ENCODE measurements at regions of chr6 and their contacts with region 1.

Region 1: DNA sequence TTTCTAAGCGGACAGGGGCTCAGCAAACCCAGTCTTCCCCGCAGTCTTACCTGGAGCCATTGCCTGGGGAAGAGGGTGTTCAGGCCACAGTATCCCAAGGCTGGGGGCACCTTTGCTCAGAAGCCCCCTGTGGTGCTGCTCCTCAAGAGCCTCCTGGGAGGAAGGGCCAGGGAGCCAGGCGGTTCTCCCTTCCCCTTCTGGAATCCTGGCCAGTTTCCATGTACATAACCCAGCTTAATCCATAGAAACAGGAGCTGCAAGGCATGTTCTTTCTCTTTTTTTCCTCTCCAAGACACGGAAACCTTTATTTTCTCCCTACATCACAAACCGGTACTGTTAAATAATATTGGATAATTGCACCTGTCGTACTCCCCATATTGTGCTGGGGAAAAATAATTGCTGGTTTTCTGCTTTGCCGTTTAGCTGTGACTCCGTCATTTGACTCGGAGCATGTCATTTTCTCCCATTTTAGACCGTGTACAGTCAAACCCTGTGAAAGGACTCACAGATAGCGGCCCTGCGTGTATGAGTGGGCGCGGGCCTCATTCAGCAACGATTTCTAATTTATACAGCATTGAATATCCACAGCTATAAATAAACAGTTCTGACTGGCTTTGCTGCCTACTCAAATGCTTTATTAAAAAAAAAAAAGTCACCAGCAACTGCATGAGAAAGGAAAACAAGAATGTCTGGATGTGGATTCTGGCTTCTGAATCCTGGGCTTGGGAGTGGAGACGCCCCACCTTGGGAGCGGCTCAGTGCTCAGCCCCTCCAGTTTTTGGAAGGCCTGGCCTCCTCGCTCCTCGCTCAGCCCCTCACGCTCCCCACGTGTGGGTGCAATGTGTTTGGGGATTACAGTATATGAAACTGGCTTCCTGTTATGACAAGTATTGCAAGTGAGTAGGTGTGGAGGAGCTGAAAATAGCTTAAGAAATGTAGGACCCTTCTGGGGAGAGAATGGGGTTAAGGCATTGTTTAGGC is 67.3 kb downstream of the ADTRP start:
- DNase-seq: peak; percentile 80
- H3K4me3 Mint-ChIP-seq: peak overlapping the region; percentile 83
- H3K27ac Mint-ChIP-seq: peak overlapping the region; percentile 99
- H3K4me1 Mint-ChIP-seq: peaks cover 71% of the 10 kb centered on the region
- H3K27me3 Mint-ChIP-seq: no peaks in the 10 kb centered on the region

Region 2: DNA sequence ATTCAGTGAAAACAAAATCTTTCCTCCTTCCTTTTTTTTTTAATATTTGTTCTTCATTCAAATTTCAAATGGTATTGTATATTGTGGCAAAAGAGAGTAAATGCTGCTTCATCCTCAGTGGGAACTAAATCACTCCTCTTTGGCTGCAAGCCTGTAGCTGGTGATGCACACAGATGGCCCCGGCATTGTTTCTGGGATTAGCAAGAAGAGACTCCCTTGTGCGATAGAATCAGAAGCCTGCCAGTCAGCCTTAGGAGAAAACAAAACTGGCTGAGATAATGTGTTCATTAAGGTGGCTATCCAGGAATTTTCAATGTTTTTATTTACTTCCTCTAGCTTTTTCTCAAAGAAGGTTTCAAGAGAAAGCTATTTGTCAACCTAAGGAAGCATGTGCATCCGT is 646.5 kb before region 1 on chr6:
- intact Hi-C with region 1: no loop called
- DNase-seq: no peak
- H3K4me3 Mint-ChIP-seq: no peak overlapping the region
- H3K27ac Mint-ChIP-seq: no peak overlapping the region
- H3K4me1 Mint-ChIP-seq: no peaks in the 10 kb centered on the region
- H3K27me3 Mint-ChIP-seq: peaks cover 10% of the 10 kb centered on the region

Region 3: GRCh38 chr6:11722805-11723631 is 11.7 kb after region 1 on chr6:
- intact Hi-C with region 1: loop called (anchors 1 kb)
- DNase-seq: no peak
- H3K4me3 Mint-ChIP-seq: peak overlapping the region; percentile 68
- H3K27ac Mint-ChIP-seq: peak overlapping the region; percentile 79
- H3K4me1 Mint-ChIP-seq: peaks cover 50% of the 10 kb centered on the region
- H3K27me3 Mint-ChIP-seq: no peaks in the 10 kb centered on the region

Region 4: GRCh38 chr6:11785774-11786579 is 74.7 kb after region 1 on chr6:
- intact Hi-C with region 1: loop called (anchors 1 kb)
- DNase-seq: peak; percentile 82
- H3K4me3 Mint-ChIP-seq: peak overlapping the region; percentile 46
- H3K27ac Mint-ChIP-seq: peak overlapping the region; percentile 72
- H3K4me1 Mint-ChIP-seq: peaks cover 7% of the 10 kb centered on the region
- H3K27me3 Mint-ChIP-seq: no peaks in the 10 kb centered on the region

Region 5: GRCh38 chr6:11912426-11912825 is 201.1 kb after region 1 on chr6:
- intact Hi-C with region 1: loop called (anchors 5 kb)
- DNase-seq: no peak
- H3K4me3 Mint-ChIP-seq: no peak overlapping the region
- H3K27ac Mint-ChIP-seq: no peak overlapping the region
- H3K4me1 Mint-ChIP-seq: peaks cover 9% of the 10 kb centered on the region
- H3K27me3 Mint-ChIP-seq: no peaks in the 10 kb centered on the region

Region 6: GRCh38 chr6:12119085-12119588 is 407.8 kb after region 1 on chr6:
- intact Hi-C with region 1: loop called (anchors 1 kb)
- DNase-seq: peak; percentile 92
- H3K4me3 Mint-ChIP-seq: peak overlapping the region; percentile 41
- H3K27ac Mint-ChIP-seq: peak overlapping the region; percentile 78
- H3K4me1 Mint-ChIP-seq: peaks cover 64% of the 10 kb centered on the region
- H3K27me3 Mint-ChIP-seq: no peaks in the 10 kb centered on the region

Measured in activated CD4-positive, alpha-beta T cell treated with anti-CD3 and anti-CD28 coated beads, Interleukin-2, amount 10 ng/mL, durations not matched to agents 24 days and 14 days (primary cell).